ENCODE measurements at regions of chr11 and their contacts with region 1.

Region 1: DNA sequence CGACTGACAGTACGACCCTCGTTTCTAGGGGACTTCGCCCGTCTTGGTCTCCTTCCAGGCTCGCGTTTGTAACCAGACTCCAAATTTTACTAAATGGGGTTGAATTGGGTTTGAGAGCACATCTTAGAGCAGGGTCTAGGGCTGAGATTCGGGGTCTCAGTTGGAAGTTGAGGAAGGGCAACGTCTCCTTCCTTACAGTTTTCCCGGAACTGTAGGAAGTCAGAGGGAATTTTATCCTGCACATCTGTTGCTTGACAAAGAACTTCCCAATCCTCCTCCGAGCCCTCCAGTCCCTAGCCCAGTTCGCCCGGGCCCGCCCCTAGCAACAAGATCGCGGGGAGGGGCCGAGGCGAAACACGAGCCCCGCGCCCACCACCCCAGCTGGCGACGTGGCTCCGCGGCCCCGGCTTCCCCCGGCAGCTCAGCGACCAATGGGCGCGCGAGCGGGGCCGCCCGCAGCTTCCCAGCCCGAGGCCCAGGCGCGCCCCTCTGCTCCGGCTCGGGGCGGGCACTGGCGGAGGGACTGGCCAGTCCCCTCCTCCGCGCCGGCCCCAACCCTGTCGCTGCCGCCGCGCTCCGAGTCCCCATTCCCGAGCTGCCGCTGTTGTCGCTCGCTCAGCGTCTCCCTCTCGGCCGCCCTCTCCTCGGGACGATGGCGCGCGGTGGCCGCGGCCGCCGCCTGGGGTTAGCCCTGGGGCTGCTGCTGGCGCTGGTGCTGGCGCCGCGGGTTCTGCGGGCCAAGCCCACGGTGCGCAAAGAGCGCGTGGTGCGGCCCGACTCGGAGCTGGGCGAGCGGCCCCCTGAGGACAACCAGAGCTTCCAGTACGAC is at the start of gene RCN1:
- DNase-seq: peak; percentile 80
- total RNA-seq, gene RCN1: 26.0 TPM

Region 2: GRCh38 chr11:32154275-32154674 is 63.5 kb after region 1 on chr11:
- intact Hi-C with region 1: loop called (anchors 5 kb)
- DNase-seq: no peak